WTC11 (cell line): ENCODE measurements at regions of chr12 and their contacts with region 1.

Region 1: DNA sequence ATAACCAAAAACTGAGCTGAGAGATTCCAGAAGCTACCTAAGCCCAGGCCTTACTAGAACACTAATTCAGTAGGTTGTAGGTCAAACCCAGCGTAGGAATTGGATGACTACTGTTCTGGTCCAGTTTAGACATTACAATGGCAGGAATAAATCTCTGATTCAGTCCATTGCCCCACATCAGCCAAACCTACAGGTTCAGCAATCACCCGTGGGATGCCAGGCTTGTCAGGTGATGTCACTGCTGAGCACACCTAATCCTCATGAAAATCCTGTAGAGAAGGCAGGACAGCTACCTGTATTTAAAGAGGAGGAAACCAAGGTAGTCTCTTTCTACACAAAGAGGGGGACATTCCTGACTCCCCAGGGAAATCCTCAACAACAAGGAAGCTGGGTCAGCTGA is 63.7 kb downstream of the RFX4 start:
- DNase-seq: no peak
- ATAC-seq: no peak
- H3K4me3 Mint-ChIP-seq: no peak overlapping the region
- H3K27ac Mint-ChIP-seq: no peak overlapping the region
- H3K4me1 Mint-ChIP-seq: peaks cover 7% of the 10 kb centered on the region
- H3K27me3 Mint-ChIP-seq: no peaks in the 10 kb centered on the region
- CTCF ChIP-seq: no peak

Region 2: DNA sequence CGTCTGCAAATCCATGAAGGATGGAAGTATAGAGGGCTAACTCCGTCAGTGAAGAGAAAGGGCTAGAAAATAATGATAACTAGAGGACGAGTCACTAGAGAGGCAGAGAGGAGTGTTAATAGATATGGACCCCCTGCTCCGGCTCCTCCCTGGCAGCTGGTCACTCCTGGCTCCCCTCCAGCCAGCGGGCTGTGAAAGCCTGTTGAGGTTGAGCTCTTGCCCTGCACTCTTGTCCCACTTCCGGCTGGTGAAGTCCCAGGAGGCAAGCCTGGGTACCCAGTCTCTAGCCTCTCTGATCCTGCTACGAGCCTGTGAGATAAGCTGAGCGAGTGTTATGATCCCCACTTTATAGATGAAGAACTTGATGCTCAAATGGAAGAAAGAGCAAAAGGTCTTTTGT is 26.7 kb after region 1 on chr12:
- CTCF ChIA-PET with region 1: no interaction called
- POLR2A ChIA-PET with region 1: no interaction called
- DNase-seq: no peak
- ATAC-seq: peak; percentile 33; the same call in 1 of the 2 replicates
- H3K4me3 Mint-ChIP-seq: peak overlapping the region; percentile 4; the same call in 1 of the 2 replicates
- H3K27ac Mint-ChIP-seq: no peak overlapping the region
- H3K4me1 Mint-ChIP-seq: peaks cover 24% of the 10 kb centered on the region
- H3K27me3 Mint-ChIP-seq: no peaks in the 10 kb centered on the region; the same call in 1 of the 2 replicates
- CTCF ChIP-seq: no peak

Region 3: GRCh38 chr12:106709068-106709511 is 62.6 kb after region 1 on chr12:
- CTCF ChIA-PET with region 1: no interaction called
- POLR2A ChIA-PET with region 1: no interaction called
- DNase-seq: peak; percentile 19
- ATAC-seq: peak; percentile 55
- H3K4me3 Mint-ChIP-seq: no peak overlapping the region
- H3K27ac Mint-ChIP-seq: no peak overlapping the region
- H3K4me1 Mint-ChIP-seq: peaks cover 39% of the 10 kb centered on the region
- H3K27me3 Mint-ChIP-seq: no peaks in the 10 kb centered on the region
- CTCF ChIP-seq: no peak

Region 4: DNA sequence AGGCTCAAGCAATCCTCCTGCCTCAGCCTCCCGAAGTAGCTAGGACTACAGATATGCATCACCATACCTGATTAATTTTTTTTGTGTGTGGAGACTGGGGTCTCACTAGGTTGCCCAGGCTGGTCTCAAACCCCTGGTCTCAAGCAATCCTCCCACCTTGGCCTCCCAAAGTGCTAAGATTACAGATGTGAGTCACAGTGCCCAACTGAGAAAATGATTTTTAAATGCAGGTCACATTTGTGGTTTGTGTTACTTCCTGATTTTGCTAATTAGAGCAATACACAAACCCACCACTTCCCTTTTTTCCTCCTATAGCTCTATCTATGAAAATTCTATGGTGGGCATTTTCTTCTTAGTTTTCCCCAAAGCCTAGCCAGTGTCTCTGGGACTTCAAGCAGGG is 263.7 kb after region 1 on chr12:
- CTCF ChIA-PET with region 1: no interaction called
- POLR2A ChIA-PET with region 1: interaction called, 16 read pairs
- DNase-seq: no peak
- ATAC-seq: no peak
- H3K4me3 Mint-ChIP-seq: no peak overlapping the region
- H3K27ac Mint-ChIP-seq: no peak overlapping the region
- H3K4me1 Mint-ChIP-seq: peaks cover 3% of the 10 kb centered on the region; the same call in 1 of the 2 replicates
- H3K27me3 Mint-ChIP-seq: peaks cover 6% of the 10 kb centered on the region
- CTCF ChIP-seq: no peak